ENCODE measurements at regions of chr5 and their contacts with region 1.

Region 1: DNA sequence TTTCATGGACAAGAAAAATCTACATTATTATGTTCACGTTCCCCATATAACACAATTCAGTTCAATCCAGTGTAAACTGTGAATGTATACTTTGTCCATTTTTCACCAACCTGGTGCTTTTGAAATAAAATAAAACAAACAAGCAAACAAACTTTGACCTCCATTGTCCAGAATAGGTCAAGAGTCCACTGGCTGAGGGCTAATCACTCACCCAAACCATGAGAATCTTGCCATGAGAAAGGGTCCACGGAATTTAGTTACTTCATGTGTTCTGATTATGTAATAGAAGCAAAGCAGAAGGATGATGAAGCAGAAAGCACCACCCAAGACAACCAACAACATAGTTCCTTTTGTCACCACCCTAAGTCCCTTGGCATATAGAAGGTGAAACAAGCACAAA is 28.7 kb downstream of the DIAPH1 start:
- DNase-seq: no peak
- ATAC-seq: no peak
- H3K4me3 ChIP-seq: no peak overlapping the region
- H3K27ac ChIP-seq: peak overlapping the region in 2 of 4 donors; percentile 37 to 94
- H3K4me1 ChIP-seq: peaks cover 23 to 32% of the 10 kb centered on the region in 2 donors
- H3K27me3 ChIP-seq: no peaks in the 10 kb centered on the region
- CTCF ChIP-seq: no peak
- POLR2A ChIP-seq: no peak

Region 2: DNA sequence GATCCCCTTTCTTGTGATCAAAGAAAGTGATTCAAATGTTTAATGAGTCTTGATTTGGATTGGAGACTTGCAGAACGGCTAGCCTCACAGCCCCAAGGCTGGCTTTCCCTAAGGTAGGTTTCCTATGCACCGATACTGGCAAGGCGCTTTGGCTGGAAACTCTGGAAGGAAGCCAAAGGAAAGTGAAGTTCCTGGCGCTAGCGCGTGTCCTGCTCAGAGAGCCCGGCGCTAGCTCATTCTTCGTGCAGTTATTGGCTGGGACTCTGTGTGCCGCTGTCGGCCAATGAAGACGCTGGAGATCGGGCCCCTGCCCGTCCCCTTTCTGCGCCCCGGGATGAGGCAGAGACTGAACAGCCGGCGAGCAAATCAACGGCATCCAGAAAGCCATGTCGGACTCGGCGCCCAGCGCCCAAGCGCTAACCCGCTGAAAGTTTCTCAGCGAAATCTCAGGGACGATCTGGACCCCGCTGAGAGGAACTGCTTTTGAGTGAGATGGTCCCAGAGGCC is 114.4 kb before region 1 on chr5 and contains the start of gene PCDHGC3:
- in situ Hi-C with region 1: no loop called
- intact Hi-C with region 1: no loop called
- DNase-seq: peak; percentile 92 to 95
- ATAC-seq: peak; percentile 95
- H3K4me3 ChIP-seq: peak within 1 kb of the TSS; percentile 69 to 83 (median 75)
- H3K27ac ChIP-seq: peak within 1 kb of the TSS; percentile 82 to 91 (median 88)
- H3K4me1 ChIP-seq: peaks cover 48 to 53% of the 10 kb centered on the region in 2 donors
- H3K27me3 ChIP-seq: no peaks in the 10 kb centered on the region
- CTCF ChIP-seq: peak in 4 of 5 experiments; percentile 36 to 63 (median 58)
- POLR2A ChIP-seq: peak; percentile 35 to 67
- total RNA-seq, gene PCDHGC3: 11.8 to 14.5 (median 13.8) TPM

Region 3: GRCh38 chr5:141605523-141606277 is 15.6 kb after region 1 on chr5:
- in situ Hi-C with region 1: no loop called
- intact Hi-C with region 1: no loop called
- DNase-seq: peak; percentile 23 to 42
- ATAC-seq: peak in 1 of 2 donors; percentile 17
- H3K4me3 ChIP-seq: no peak overlapping the region
- H3K27ac ChIP-seq: peak overlapping the region; percentile 89 to 94 (median 91)
- H3K4me1 ChIP-seq: peaks cover 85 to 92% of the 10 kb centered on the region in 2 donors
- H3K27me3 ChIP-seq: no peaks in the 10 kb centered on the region
- CTCF ChIP-seq: no peak
- POLR2A ChIP-seq: no peak

Region 4: GRCh38 chr5:141636413-141637122 is 46.4 kb after region 1 on chr5 and contains the starts of genes HDAC3 and RELL2:
- in situ Hi-C with region 1: loop called in 1 of 4 experiments (anchors 5 kb)
- intact Hi-C with region 1: loop called (anchors 5 kb)
- DNase-seq: peak; percentile 89 to 91
- ATAC-seq: peak; percentile 90 to 93
- H3K4me3 ChIP-seq: peak within 1 kb of the TSS; percentile 64 to 91 (median 88)
- H3K27ac ChIP-seq: peak within 1 kb of the TSS; percentile 74 to 92 (median 86)
- H3K4me1 ChIP-seq: peaks cover 22 to 26% of the 10 kb centered on the region in 2 donors
- H3K27me3 ChIP-seq: peaks cover 5 to 16% (median 12%) of the 10 kb centered on the region in 3 donors
- CTCF ChIP-seq: no peak
- POLR2A ChIP-seq: peak; percentile 93 to 95
- total RNA-seq, gene HDAC3: 29.8 to 40.7 (median 35.7) TPM
- total RNA-seq, gene RELL2: 0.16 to 1.1 TPM in 2 of 4 donors, not detected in the others

Measured in gastrocnemius medialis (tissue), 4 donors.